ACHN (cell line): ENCODE measurements at regions of chr1 and their contacts with region 1.

Region 1: DNA sequence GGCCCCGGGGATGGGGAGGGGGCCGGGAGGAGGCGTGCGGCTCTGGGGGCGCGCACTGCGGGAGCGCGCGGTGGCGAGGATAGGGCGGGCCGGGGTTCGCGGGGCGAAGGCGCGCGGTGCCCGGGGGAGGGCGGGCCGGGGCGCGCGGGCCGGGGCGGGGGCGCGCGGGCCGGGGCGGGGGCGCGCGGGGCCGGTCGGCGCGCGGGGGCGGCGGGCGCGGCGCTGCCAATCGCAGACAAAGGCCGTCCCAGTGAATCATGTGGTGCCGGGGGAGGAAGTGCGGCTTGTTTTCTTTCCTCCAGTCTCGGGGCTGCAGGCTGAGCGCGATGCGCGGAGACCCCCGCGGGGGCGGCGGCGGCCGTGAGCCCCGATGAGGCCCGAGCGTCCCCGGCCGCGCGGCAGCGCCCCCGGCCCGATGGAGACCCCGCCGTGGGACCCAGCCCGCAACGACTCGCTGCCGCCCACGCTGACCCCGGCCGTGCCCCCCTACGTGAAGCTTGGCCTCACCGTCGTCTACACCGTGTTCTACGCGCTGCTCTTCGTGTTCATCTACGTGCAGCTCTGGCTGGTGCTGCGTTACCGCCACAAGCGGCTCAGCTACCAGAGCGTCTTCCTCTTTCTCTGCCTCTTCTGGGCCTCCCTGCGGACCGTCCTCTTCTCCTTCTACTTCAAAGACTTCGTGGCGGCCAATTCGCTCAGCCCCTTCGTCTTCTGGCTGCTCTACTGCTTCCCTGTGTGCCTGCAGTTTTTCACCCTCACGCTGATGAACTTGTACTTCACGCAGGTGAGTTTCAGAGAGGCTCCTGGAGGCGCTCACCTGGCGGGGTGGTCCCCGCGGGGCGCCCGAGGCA is at the start of gene GPR137B:
- DNase-seq: peak; percentile 61

Region 2: DNA sequence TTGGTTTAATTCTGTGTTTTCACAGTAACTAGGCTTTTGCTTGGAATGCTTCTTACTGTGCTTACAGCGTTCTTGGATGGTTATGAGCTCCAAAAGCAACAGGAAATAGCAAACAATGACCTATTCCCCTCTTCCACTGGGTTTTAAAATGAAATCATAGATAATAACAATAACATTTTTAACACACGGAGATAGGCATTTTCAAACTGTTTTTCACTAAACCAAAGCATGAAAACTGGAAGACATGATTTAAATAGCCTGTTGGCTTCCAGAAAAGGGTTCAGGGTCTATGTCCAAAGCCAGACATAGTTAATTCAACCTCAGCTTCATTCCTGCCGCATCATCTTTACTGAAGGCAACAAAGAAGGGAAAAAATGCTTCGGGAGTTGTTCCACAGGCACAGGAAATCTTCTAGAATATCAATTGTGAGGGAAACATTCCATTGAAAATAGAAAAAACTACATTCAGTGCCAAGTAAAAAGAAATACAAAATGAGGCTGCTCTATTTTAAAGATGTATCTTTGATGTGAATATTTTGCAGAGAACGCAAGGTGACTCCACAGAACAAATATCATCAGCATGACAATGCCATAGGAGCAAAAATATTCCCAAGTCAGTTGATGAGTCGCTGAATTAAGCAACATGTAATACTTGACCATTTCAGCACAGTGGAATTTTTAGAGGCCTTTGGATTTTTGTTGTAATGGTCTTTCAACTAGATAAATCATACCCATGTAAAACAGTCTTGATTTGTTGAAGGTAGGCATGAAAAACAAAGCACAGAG is 158.2 kb before region 1 on chr1:
- in situ Hi-C with region 1: no loop called
- DNase-seq: no peak

Region 3: DNA sequence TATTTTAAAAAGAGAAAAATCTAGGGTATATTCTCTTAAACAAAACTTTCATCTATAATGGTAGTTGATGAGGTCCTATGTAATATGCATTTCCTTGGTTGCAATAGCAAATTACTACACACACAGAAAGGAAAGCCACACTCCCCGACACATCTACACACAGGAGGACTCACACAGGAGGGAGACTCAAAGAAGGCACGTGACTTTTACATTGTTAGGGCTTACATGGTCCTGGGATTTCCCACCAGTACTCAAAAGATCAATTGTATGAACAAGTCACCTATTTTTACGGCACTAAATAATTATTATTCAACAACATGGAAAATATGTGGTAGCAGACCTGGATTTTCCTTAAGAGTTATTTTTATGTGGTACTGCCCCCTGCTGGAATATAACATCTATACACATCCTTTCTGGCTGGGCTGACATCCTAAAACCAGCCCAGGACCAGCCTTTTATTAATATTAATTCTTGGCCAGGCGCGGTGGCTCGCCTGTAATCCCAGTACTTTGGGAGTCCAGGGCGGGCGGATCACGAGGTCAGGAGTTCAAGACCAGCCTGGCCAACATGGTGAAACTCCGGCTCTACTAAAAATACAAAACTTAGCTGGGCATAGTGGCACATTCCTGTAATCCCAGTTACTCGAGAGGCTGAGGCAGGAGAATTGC is 347.4 kb after region 1 on chr1:
- in situ Hi-C with region 1: loop called (anchors 25 kb)
- DNase-seq: peak; percentile 66